ENCODE measurements at regions of chr7 and their contacts with region 1.

Region 1: GRCh38 chr7:127850195-127850594 is 181.0 kb downstream of the LRRC4 start:
- DNase-seq: no peak
- ATAC-seq: no peak
- H3K4me3 ChIP-seq: no peak overlapping the region
- H3K4me3 Mint-ChIP-seq: no peak overlapping the region
- H3K27ac ChIP-seq: no peak overlapping the region
- H3K27ac Mint-ChIP-seq: no peak overlapping the region
- H3K4me1 ChIP-seq: no peaks in the 10 kb centered on the region
- H3K4me1 Mint-ChIP-seq: peaks cover 6 to 12% (median 11%) of the 10 kb centered on the region in 3 donors
- H3K27me3 ChIP-seq: no peaks in the 10 kb centered on the region
- H3K27me3 Mint-ChIP-seq: peaks cover 0 to 2% of the 10 kb centered on the region in 2 donors

Region 2: GRCh38 chr7:127629268-127629854 is 220.8 kb before region 1 on chr7:
- CTCF ChIA-PET with region 1: no interaction called
- POLR2A ChIA-PET with region 1: no interaction called
- DNase-seq: peak in 14 of 35 experiments; percentile 8 to 35 (median 21)
- ATAC-seq: peak in 3 of 4 experiments; percentile 53 to 56 (median 56)
- H3K4me3 ChIP-seq: no peak overlapping the region
- H3K4me3 Mint-ChIP-seq: no peak overlapping the region
- H3K27ac ChIP-seq: no peak overlapping the region
- H3K27ac Mint-ChIP-seq: no peak overlapping the region
- H3K4me1 ChIP-seq: peaks cover 0 to 4% of the 10 kb centered on the region in 2 experiments
- H3K4me1 Mint-ChIP-seq: peaks cover 0 to 6% (median 2%) of the 10 kb centered on the region in 3 donors
- H3K27me3 ChIP-seq: peaks cover 0 to 19% of the 10 kb centered on the region in 2 experiments
- H3K27me3 Mint-ChIP-seq: peaks cover 19 to 31% of the 10 kb centered on the region in 2 donors

Region 3: GRCh38 chr7:127893547-127893946 is 43.4 kb after region 1 on chr7:
- CTCF ChIA-PET with region 1: no interaction called
- POLR2A ChIA-PET with region 1: interaction called in 1 of 2 experiments, 11 read pairs
- DNase-seq: no peak
- ATAC-seq: no peak
- H3K4me3 ChIP-seq: no peak overlapping the region
- H3K4me3 Mint-ChIP-seq: no peak overlapping the region
- H3K27ac ChIP-seq: no peak overlapping the region
- H3K27ac Mint-ChIP-seq: no peak overlapping the region
- H3K4me1 ChIP-seq: no peaks in the 10 kb centered on the region
- H3K4me1 Mint-ChIP-seq: peaks cover 6 to 12% (median 10%) of the 10 kb centered on the region in 3 donors
- H3K27me3 ChIP-seq: no peaks in the 10 kb centered on the region
- H3K27me3 Mint-ChIP-seq: no peaks in the 10 kb centered on the region

Region 4: GRCh38 chr7:128108641-128109423 is 258.6 kb after region 1 on chr7:
- CTCF ChIA-PET with region 1: no interaction called
- POLR2A ChIA-PET with region 1: no interaction called
- DNase-seq: peak in 18 of 35 experiments; percentile 9 to 65 (median 23)
- ATAC-seq: peak; percentile 83 to 89 (median 87)
- H3K4me3 ChIP-seq: peak overlapping the region; percentile 2 to 66
- H3K4me3 Mint-ChIP-seq: peak overlapping the region; percentile 48 to 72 (median 60)
- H3K27ac ChIP-seq: peak overlapping the region; percentile 72
- H3K27ac Mint-ChIP-seq: peak overlapping the region; percentile 79 to 90
- H3K4me1 ChIP-seq: peaks cover 59 to 80% of the 10 kb centered on the region in 2 experiments
- H3K4me1 Mint-ChIP-seq: peaks cover 68 to 79% (median 76%) of the 10 kb centered on the region in 3 donors
- H3K27me3 ChIP-seq: peaks cover 0 to 6% of the 10 kb centered on the region in 2 experiments
- H3K27me3 Mint-ChIP-seq: peaks cover 0 to 3% of the 10 kb centered on the region in 2 donors

Region 5: DNA sequence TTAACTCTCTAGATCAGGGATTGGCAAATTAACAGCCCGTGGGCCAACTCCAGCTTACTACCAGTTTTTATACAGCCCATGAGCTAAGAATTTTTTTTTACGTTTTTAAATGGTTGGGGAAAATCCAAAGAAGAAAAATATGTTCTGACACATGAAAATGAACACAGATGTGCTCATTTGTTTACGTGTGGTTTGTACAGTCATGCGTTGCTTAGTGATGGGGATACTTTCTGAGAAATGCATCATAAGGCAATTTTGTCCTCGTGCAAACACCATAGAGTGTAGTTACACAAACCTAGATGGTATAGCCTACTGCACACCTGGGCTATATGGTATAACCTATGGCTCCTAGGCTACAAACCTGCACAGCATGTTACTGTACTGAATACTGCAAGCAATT is 1643.8 kb after region 1 on chr7:
- CTCF ChIA-PET with region 1: no interaction called
- POLR2A ChIA-PET with region 1: interaction called in 1 of 2 experiments, 11 read pairs
- DNase-seq: peak in 1 of 35 experiments; percentile 34
- ATAC-seq: peak in 3 of 4 experiments; percentile 27 to 55 (median 37)
- H3K4me3 ChIP-seq: no peak overlapping the region
- H3K4me3 Mint-ChIP-seq: no peak overlapping the region
- H3K27ac ChIP-seq: no peak overlapping the region
- H3K27ac Mint-ChIP-seq: peak overlapping the region in 1 of 2 donors; percentile 13
- H3K4me1 ChIP-seq: peaks cover 0 to 7% of the 10 kb centered on the region in 2 experiments
- H3K4me1 Mint-ChIP-seq: peaks cover 0 to 29% (median 4%) of the 10 kb centered on the region in 3 donors
- H3K27me3 ChIP-seq: no peaks in the 10 kb centered on the region
- H3K27me3 Mint-ChIP-seq: no peaks in the 10 kb centered on the region